Kidney (tissue), 22 donors: ENCODE measurements at regions of chr12 and their contacts with region 1.

Region 1: DNA sequence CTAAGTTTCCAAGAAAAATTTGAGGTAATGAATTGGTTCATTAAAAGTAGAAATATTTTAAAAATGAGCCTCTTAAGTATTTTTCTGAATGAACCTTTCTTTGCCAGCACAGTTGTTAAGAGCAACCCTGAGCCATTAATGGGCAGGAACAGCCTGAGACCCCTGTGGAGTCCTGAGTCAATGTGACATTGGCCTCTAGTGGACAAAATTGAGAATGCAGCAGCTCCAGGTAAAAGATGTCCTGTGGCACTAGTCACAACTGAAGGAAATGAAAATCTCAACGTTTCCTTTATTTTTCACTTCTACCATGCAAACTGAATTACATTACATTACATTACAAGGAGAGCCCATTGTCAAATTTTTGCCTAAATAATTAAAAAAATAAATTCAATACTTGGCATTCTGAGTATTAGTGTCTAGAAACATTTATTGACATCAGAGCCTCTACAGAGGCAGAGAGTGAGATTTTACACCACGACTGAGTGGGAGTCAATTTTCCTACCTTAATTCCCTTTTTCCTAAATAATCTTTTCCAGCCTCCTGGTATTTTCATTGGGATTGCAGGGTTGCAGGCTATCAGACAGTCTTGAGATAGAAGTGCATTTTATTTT is 135.7 kb downstream of the PPM1H start:
- DNase-seq: peak in 4 of 5 donors; percentile 70 to 90 (median 82)
- H3K4me3 ChIP-seq: no peak overlapping the region
- H3K27ac ChIP-seq: no peak overlapping the region
- H3K4me1 ChIP-seq: no peaks in the 10 kb centered on the region
- H3K27me3 ChIP-seq: no peaks in the 10 kb centered on the region
- CTCF ChIP-seq: peak; percentile 97

Region 2: GRCh38 chr12:61687407-61687806 is 1111.8 kb before region 1 on chr12:
- intact Hi-C with region 1: no loop called
- DNase-seq: no peak
- H3K4me3 ChIP-seq: no peak overlapping the region
- H3K27ac ChIP-seq: no peak overlapping the region
- H3K4me1 ChIP-seq: no peaks in the 10 kb centered on the region
- H3K27me3 ChIP-seq: no peaks in the 10 kb centered on the region
- CTCF ChIP-seq: no peak

Region 3: DNA sequence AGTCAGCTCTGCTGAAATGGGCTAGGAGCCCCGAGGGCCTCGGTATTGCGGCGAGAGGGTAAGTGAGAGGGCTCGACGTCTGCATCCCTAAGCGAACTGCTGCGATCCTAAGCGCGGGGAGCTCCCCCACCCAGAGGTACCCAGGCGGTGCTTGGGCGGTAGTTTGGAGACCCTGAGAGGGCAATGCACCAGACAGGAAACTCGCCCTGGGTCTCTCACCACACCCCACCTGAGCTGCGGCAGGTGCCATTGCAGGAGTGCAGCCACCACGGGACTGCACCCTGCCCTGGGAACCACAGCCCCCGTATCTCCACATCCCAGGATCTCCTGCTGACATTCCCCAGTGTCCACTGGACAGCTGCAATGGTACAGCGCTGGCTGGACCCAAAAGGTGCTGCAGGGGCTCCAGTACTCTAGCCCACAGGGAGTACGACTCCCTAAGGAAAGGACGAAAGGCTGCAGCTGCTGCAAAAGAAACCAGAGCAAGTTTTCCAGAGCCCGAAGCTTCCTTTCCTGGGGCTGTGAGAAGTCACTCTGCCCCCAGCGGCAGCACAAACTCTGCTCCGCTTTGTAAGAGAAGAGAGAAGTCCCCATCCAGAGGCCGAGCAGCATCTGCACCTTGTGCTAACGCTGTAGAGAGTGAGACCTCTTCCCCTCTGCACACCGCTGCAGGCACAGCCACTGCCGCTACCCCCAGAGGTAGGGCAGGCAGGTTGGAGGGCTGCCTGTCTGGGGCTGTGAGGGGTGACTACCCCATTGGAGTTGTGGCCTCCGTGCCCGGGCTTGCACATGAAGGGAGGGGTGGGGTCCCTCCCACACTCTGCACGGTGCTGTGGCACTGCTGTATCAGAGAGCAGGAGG is 363.7 kb before region 1 on chr12:
- intact Hi-C with region 1: loop called (anchors 10 kb)
- DNase-seq: peak; percentile 67 to 86 (median 78)
- H3K4me3 ChIP-seq: peak overlapping the region; percentile 52 to 78 (median 62)
- H3K27ac ChIP-seq: no peak overlapping the region
- H3K4me1 ChIP-seq: peaks cover 0 to 10% (median 0%) of the 10 kb centered on the region in 3 donors
- H3K27me3 ChIP-seq: peaks cover 4% of the 10 kb centered on the region
- CTCF ChIP-seq: peak; percentile 30

Region 4: DNA sequence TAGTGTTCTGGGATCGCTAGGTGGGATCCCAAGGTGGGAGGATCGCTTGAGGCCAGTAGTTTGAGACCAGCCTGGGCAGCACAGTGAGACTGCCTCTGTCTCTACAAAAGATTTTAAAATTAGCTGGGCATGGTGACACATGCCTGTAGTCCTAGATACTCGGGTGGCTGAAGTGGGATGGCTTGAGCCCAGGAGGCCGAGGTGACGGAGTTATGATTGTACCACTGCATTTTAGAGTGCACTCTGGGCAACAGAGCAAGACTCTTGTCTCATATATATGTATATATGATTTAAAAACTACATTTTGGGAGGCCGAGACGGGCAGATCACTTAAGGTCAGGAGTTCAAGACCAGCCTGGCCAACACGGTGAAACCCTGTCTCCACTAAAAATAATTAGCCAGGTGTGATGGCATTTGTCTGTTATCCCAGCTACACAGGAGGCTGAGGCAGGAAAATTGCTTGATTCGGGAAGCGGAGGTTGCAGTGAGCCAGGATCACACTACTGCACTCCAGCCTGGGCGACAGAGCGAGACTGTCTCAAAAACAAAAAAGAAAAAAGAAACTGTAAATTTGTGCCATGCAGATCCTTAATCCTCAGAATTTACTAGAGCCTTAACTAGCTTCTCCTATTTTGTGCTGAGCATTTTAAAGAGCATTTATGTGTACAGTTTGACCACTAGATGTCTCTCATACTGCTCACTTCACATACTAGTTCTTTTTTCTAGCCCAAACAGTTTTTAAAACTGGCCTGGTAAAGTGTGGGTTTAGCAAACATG is 217.8 kb before region 1 on chr12:
- intact Hi-C with region 1: loop called (anchors 5 kb)
- DNase-seq: peak in 2 of 5 donors; percentile 65 to 86
- H3K4me3 ChIP-seq: no peak overlapping the region
- H3K27ac ChIP-seq: no peak overlapping the region
- H3K4me1 ChIP-seq: no peaks in the 10 kb centered on the region
- H3K27me3 ChIP-seq: no peaks in the 10 kb centered on the region
- CTCF ChIP-seq: peak; percentile 77